ENCODE measurements at regions of chr16 and their contacts with region 1.

Region 1: DNA sequence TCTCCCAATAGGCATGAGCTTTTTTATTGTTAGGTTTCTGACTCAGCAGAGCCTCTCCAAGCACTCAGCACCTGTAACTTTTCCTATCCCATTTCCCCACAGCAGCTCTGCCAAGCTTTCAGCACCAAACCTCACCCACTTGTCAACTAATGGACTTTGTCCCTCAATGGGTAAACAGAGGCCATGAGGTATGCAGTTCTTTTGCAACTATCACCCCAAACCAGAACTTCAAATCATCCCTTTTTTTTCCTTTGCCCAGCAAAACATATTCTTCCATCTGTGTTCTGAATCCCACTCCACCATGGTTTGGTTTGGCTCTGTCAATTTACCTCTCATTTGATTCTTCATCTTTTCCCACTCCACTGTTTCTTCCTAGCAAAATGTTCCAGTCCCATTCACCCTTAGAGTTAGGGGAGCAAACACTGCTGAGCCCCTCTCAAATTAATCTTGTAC is 58.1 kb downstream of the TOX3 start:
- DNase-seq: no peak

Region 2: DNA sequence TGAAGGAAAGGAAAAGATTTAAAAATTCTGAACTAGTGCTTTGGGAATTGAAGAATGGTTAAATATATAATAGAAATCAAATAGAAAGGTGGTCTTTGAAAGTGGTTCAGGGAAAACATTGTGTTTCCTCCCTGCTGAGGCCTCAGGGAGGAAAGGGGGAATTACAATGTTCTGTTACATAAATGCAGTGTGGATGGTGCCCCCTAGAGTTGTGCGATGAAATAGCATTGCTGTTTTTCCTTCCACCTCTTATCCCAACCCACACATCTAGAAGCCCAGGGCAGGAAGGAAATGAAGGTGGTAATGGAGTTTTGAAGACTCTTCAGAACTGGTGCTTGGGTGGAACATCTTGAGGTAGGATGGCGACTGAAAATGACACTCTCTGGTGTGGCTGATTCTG is 64.5 kb after region 1 on chr16:
- intact Hi-C with region 1: no loop called
- DNase-seq: no peak

Region 3: DNA sequence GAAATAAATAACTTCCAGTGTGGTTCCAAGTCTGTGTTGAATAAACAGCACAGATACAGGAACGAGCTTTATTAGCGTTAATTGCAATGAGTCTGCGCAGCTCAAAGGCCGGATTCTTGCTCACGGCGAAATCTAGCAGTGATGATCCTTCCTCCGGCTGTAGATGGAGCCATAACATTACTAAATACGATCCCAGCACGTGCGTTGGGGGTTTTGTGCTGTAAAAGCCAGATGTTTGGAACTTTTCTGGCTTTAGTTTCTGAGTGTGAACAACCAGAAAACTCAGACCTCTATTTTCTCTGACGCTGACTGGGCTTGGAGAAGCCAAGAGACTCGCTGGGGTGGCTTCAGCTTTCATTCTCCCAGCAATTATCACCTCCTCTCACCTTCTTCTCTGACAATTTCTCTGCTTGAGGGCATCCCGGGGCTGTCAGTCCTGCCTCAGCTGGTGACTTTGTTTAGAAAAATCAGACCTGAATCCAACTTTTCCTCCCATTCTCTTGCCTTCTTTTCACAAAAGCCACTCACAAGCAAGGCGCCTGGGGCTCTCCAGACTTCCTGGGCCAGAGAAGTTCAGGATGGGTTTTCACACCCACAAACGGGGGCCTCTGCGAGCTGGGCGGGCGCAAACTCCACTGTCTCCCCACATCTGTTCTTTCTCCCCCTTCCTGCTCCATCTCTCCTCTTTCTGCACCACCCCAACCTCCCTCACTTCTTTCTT is 1061.3 kb after region 1 on chr16:
- intact Hi-C with region 1: loop called in 1 of 2 experiments (anchors 10 kb)
- DNase-seq: no peak